Activated CD8-positive, alpha-beta T cell treated with anti-CD3 and anti-CD28 coated beads, Interleukin-2, amount 10 ng/mL, durations not matched to agents 7 days and 5 days (primary cell): ENCODE measurements at regions of chr10 and their contacts with region 1.

Region 1: DNA sequence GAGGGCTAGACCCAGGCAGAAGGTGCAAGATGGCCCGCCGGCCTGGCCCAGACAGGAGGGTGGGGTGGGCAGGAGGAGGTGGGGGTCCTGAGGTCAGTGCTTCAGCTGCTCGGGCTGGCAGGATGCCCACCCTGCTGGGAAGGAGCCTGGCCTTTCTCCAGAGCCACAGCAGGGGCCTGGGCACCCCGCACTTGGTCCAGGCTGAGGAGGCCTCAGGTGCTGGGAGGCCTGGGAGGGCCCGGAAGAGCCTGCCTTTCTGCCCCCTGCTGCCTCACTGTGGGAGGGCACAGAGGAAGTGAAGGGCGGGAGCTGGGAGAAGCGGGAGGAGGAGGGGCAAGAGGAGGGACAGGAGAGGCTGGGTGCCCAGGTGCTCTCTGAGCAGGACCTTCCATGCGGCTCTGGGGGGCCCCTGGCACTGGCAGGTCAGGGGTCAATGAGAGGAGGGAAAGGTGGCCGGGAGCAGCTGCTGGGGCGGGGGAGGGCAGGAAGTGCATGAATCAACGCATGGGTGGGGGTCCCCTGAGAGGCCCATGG is 49.7 kb downstream of the PWWP2B start:
- DNase-seq: peak; percentile 91
- ATAC-seq: peak; percentile 71
- H3K4me3 Mint-ChIP-seq: peak overlapping the region; percentile 68
- H3K27ac Mint-ChIP-seq: peak overlapping the region; percentile 98
- H3K4me1 Mint-ChIP-seq: peaks cover 53% of the 10 kb centered on the region
- H3K27me3 Mint-ChIP-seq: no peaks in the 10 kb centered on the region

Region 2: DNA sequence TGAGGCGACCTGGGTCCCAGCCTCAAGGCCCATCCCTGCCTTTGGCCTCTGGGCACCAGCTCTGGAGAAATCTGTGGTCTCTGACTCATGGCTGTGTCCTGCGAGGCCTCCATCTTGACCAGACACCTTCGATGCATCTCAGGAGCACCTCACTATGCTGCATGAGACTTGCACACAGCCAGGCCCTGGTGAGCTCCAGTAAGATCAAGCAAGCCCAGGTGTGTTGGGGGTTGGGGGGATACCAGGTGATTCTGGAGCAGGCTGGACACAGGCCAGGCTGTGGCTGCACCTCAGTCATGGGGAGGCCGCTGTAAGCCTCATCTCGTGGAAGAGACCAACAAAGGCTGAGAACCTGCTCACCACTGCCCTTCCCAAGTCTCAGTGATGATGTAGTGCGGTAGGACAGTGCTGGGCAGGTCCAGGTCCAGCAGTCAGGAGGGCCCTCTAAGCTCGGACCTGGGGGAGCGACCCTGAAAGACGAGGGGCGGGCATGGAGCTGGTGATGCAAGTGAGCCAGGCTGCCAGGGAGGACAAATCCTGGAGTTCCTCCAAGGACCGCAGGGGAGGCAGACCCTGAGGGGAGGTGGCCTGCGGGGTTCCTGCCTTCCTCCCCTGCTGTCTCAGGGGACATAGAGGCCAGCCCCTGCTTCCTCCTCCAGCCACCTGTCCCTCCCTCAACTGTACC is 53.1 kb before region 1 on chr10:
- CTCF ChIA-PET with region 1: interaction called, 13 read pairs
- POLR2A ChIA-PET with region 1: interaction called, 8 read pairs
- DNase-seq: no peak
- ATAC-seq: no peak
- H3K4me3 Mint-ChIP-seq: no peak overlapping the region
- H3K27ac Mint-ChIP-seq: no peak overlapping the region
- H3K4me1 Mint-ChIP-seq: peaks cover 13% of the 10 kb centered on the region
- H3K27me3 Mint-ChIP-seq: no peaks in the 10 kb centered on the region